Posterior cingulate gyrus (tissue), 11 donors: ENCODE measurements at regions of chr18 and their contacts with region 1.

Region 1: DNA sequence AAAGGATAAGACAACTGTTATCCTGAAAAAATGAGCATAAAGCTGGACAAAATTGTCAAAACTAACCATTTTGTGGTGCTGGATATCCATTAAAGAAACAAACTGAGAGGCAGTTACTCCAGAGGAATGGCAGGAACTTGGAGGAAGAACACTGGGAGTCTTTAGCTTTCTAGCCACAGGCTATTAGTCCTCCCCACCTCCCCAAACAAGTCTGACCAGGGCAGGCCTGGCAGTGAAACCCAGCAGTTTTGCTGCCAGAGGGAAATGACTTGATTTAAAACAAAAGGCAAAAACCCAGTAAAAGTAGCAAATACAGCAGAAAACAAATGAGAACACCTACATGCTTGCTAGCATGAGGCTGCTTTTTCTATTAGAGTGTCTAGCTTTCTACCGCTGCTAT is 34.9 kb downstream of the OSBPL1A start:
- DNase-seq: no peak

Region 2: DNA sequence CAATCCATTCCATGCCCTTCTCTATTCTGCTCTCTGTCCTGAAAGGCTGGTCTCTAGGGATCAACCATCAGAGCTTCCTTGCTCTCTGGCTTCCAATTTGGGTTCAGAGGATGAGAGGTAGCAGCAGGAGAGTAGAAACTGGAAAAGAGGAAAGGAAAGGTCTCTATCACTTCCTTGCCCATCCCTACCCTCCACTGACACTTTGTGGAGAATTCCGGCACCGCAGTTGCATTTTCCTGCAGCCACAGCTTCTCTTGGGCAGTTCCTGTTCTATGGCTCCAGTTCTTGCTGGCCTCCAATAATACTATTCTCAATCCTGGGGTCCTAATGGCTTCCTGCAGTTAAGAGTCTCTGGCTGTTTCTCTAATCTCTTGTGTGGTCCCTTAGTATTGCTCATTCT is 50.4 kb after region 1 on chr18:
- intact Hi-C with region 1: loop called (anchors 5 kb)
- DNase-seq: peak in 4 of 10 donors; percentile 29 to 40 (median 32)

Region 3: GRCh38 chr18:24488824-24489493 is 126.2 kb after region 1 on chr18:
- intact Hi-C with region 1: loop called (anchors 1 kb)
- DNase-seq: no peak

Region 4: DNA sequence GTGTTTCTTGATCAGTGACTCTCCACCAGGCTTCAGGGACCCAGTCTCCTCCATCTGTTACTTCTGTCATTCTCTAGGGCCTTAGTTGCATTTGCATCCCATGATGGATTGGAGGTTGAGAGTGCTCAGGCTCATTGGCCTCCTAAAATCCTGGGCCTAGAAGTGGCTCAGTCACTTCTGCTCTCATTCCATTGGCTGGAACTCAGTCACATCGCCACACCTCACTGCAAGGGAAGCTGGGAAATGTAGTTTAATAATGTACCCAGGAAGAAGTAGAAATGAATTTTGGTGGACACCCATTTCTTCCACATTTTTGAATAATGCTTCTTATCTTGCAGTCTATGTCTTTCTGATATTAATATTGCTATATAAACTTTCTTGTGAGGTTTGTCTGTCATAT is 321.2 kb after region 1 on chr18:
- intact Hi-C with region 1: no loop called
- DNase-seq: no peak